MCF 10A (cell line): ENCODE measurements at regions of chr3 and their contacts with region 1.

Region 1: GRCh38 chr3:146156095-146156494 is 4.9 kb downstream of the PLOD2 start:
- DNase-seq: peak; percentile 47
- H3K4me3 Mint-ChIP-seq: peak overlapping the region; percentile 86
- H3K27ac Mint-ChIP-seq: peak overlapping the region; percentile 86
- H3K4me1 Mint-ChIP-seq: peaks cover 21% of the 10 kb centered on the region
- H3K27me3 Mint-ChIP-seq: no peaks in the 10 kb centered on the region
- CTCF ChIP-seq: no peak

Region 2: GRCh38 chr3:146125951-146126350 is 30.1 kb before region 1 on chr3:
- CTCF ChIA-PET with region 1: interaction called, 8 read pairs
- POLR2A ChIA-PET with region 1: interaction called, 11 read pairs
- intact Hi-C with region 1: loop called (anchors 5 kb)
- DNase-seq: peak; percentile 92
- H3K4me3 Mint-ChIP-seq: no peak overlapping the region
- H3K27ac Mint-ChIP-seq: peak overlapping the region; percentile 55
- H3K4me1 Mint-ChIP-seq: peaks cover 50% of the 10 kb centered on the region
- H3K27me3 Mint-ChIP-seq: no peaks in the 10 kb centered on the region
- CTCF ChIP-seq: no peak

Region 3: GRCh38 chr3:146134348-146135117 is 21.6 kb before region 1 on chr3:
- CTCF ChIA-PET with region 1: interaction called, 4 read pairs
- POLR2A ChIA-PET with region 1: interaction called, 16 read pairs
- intact Hi-C with region 1: loop called (anchors 5 kb)
- DNase-seq: peak; percentile 49
- H3K4me3 Mint-ChIP-seq: no peak overlapping the region
- H3K27ac Mint-ChIP-seq: no peak overlapping the region
- H3K4me1 Mint-ChIP-seq: peaks cover 36% of the 10 kb centered on the region
- H3K27me3 Mint-ChIP-seq: no peaks in the 10 kb centered on the region
- CTCF ChIP-seq: no peak

Region 4: DNA sequence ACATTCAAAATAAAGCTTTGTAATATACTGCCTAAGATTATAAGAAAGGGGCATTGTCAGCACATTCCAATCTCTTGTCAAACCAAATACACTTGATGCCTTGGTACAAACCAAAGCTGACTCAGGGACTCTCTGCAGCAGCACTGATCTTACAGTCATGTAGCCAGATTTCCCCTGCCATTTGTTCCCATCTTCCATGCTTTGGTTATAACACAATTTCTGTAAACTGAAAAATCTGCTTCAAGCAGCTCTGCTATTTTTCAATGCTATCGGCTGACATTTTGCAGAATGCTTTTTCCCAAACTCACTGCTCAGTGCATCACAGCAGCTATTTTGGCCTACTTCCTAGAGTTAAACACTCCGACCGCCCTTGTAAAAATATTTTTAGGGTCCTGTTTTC is 13.3 kb before region 1 on chr3:
- CTCF ChIA-PET with region 1: interaction called, 12 read pairs
- POLR2A ChIA-PET with region 1: interaction called, 36 read pairs
- intact Hi-C with region 1: no loop called
- DNase-seq: peak; percentile 42
- H3K4me3 Mint-ChIP-seq: no peak overlapping the region
- H3K27ac Mint-ChIP-seq: no peak overlapping the region
- H3K4me1 Mint-ChIP-seq: peaks cover 37% of the 10 kb centered on the region
- H3K27me3 Mint-ChIP-seq: no peaks in the 10 kb centered on the region
- CTCF ChIP-seq: no peak

Region 5: GRCh38 chr3:146166450-146167225 is 10.5 kb after region 1 on chr3:
- CTCF ChIA-PET with region 1: interaction called, 3 read pairs
- POLR2A ChIA-PET with region 1: interaction called, 54 read pairs
- intact Hi-C with region 1: no loop called
- DNase-seq: peak; percentile 89
- H3K4me3 Mint-ChIP-seq: peak overlapping the region; percentile 15
- H3K27ac Mint-ChIP-seq: peak overlapping the region; percentile 65
- H3K4me1 Mint-ChIP-seq: peaks cover 46% of the 10 kb centered on the region
- H3K27me3 Mint-ChIP-seq: no peaks in the 10 kb centered on the region
- CTCF ChIP-seq: no peak

Region 6: DNA sequence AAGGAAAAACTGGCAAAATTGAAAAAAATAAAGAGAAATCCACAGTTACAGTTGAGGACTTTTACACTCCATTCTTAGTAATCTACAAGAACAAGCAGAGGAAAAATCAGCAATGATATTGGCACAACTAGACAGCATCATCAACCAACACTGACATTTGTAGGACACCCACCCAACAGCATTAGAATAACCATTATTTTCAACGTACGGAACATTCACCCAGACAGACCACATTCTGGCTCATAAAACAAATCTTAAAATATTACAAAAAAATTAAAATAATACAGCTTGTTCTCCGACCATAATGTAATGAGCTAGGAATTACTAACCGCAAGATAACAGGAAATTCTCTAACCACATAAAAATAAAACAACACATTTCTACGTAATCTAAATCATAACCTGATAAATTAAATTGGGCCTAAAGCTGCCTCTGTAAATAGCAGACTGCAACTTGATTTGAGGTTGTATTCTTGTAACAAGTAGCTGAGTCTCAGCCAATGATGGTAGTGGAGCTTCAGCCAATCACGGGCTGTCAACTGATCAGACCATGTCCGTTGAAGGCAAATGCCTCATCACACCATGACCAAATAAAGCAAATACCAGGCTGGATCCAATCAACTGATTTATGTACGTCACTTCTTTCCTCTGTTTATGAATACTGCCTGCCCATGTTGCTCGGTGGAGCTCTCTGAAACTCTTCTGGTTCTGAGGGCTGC is 85.6 kb after region 1 on chr3:
- CTCF ChIA-PET with region 1: no interaction called
- POLR2A ChIA-PET with region 1: no interaction called
- intact Hi-C with region 1: no loop called
- DNase-seq: no peak
- H3K4me3 Mint-ChIP-seq: no peak overlapping the region
- H3K27ac Mint-ChIP-seq: no peak overlapping the region
- H3K4me1 Mint-ChIP-seq: no peaks in the 10 kb centered on the region
- H3K27me3 Mint-ChIP-seq: no peaks in the 10 kb centered on the region
- CTCF ChIP-seq: no peak

Region 7: GRCh38 chr3:146342989-146343388 is 186.9 kb after region 1 on chr3:
- CTCF ChIA-PET with region 1: no interaction called
- POLR2A ChIA-PET with region 1: no interaction called
- intact Hi-C with region 1: no loop called
- DNase-seq: no peak
- H3K4me3 Mint-ChIP-seq: no peak overlapping the region
- H3K27ac Mint-ChIP-seq: no peak overlapping the region
- H3K4me1 Mint-ChIP-seq: no peaks in the 10 kb centered on the region
- H3K27me3 Mint-ChIP-seq: no peaks in the 10 kb centered on the region
- CTCF ChIP-seq: no peak